ENCODE measurements at regions of chr19 and their contacts with region 1.

Region 1: GRCh38 chr19:3319643-3320353 is 46.6 kb upstream of the NFIC start:
- DNase-seq: no peak

Region 2: GRCh38 chr19:3274942-3275582 is 44.7 kb before region 1 on chr19:
- in situ Hi-C with region 1: loop called (anchors 5 kb)
- DNase-seq: peak; percentile 79